AG04450 (cell line): ENCODE measurements at regions of chr5 and their contacts with region 1.

Region 1: GRCh38 chr5:108260117-108260857 is 121.6 kb downstream of the FBXL17 start:
- DNase-seq: peak; percentile 60
- H3K4me3 ChIP-seq: no peak overlapping the region
- H3K27ac ChIP-seq: no peak overlapping the region
- H3K27me3 ChIP-seq: no peaks in the 10 kb centered on the region
- CTCF ChIP-seq: peak; percentile 99

Region 2: DNA sequence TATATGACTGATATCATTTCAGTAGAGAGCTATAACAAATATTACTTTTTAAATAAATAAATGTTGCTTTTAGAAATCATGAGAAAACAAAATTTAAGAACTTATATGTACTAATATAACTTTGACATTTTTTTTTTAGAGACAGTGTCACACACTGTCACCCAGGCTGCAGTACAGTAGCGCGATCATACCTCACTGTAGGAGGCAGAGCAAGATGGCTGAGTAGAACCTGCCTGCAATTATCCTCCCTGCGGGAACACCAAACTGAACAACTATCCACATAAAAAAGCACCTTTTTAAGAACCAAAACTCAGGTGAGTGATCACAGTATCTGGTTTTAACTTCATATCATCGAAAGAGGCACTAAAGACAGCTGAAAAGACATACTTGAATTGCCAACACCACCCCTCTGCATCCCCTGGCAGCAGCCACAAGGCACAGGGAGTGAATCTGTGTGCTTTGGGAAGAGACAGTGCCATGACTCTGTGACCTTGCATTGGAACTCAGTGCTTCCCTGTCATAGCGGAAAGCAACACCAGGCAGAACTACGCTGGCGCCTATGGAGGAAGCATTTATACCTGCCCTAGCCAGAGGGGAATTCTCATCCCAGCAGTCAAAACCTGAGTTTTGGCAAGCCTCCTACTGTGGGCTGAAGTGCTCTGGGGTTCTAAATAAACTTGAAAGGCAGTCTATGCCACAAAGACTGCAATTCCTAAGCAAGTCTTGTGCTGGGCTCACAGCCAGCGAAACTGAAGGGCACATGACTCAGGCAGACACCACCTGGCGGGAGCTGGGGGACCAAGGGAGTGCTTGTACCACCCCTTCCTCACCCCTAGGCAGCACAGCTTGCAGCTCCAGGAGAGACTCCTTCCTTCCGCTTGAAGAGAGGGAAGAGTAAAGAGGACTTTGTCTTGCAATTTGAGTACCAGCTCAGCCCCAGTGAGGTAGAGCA is 21.1 kb before region 1 on chr5:
- CTCF ChIA-PET with region 1: interaction called, 29 read pairs
- POLR2A ChIA-PET with region 1: no interaction called
- DNase-seq: no peak
- H3K4me3 ChIP-seq: no peak overlapping the region
- H3K27ac ChIP-seq: no peak overlapping the region
- H3K27me3 ChIP-seq: no peaks in the 10 kb centered on the region
- CTCF ChIP-seq: no peak

Region 3: GRCh38 chr5:108303086-108303485 is 42.8 kb after region 1 on chr5:
- CTCF ChIA-PET with region 1: interaction called, 15 read pairs
- POLR2A ChIA-PET with region 1: no interaction called
- DNase-seq: no peak
- H3K4me3 ChIP-seq: no peak overlapping the region
- H3K27ac ChIP-seq: no peak overlapping the region
- H3K27me3 ChIP-seq: no peaks in the 10 kb centered on the region
- CTCF ChIP-seq: no peak

Region 4: DNA sequence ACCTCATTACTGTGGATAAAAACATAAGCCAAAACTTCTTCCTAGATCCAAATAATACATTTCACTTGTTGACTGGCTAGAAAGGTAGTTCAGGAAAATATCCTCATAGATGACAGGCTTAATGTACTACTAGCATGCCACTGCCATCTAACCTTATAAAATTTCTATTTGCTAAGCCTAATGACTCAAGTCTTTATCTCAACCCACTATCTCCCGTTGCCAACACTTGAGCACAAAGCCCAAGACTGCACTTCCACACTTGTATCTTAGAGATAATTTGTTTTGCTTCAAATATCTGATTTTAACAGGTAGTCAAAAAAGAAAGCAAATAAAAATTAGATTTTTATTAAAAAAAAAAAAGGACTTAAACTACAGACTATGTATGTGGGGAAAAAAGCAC is 78.9 kb after region 1 on chr5:
- CTCF ChIA-PET with region 1: interaction called, 186 read pairs
- POLR2A ChIA-PET with region 1: no interaction called
- DNase-seq: no peak
- H3K4me3 ChIP-seq: no peak overlapping the region
- H3K27ac ChIP-seq: no peak overlapping the region
- H3K27me3 ChIP-seq: no peaks in the 10 kb centered on the region
- CTCF ChIP-seq: no peak

Region 5: DNA sequence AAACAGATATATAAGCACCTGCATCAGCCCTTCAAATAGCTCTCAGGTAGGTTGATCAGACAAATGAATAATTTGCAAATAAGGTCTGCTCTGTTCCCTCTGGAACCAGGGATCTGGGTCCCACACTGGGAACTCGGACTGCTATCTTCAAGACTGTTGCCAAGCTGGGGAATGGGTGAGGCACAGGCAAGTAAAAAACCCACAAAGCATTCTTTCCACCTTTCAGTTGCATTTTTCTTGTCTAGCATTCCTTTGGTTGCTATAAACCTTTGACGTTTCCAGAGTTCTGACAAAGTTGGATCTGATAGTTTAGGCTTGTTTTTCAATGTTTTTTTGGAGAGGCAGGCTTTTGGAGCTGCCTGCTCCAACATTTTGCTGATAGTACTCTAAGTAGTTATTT is 101.5 kb after region 1 on chr5:
- CTCF ChIA-PET with region 1: interaction called, 17 read pairs
- POLR2A ChIA-PET with region 1: no interaction called
- DNase-seq: no peak
- H3K4me3 ChIP-seq: no peak overlapping the region
- H3K27ac ChIP-seq: no peak overlapping the region
- H3K27me3 ChIP-seq: no peaks in the 10 kb centered on the region
- CTCF ChIP-seq: no peak

Region 6: GRCh38 chr5:108418197-108418596 is 157.9 kb after region 1 on chr5:
- CTCF ChIA-PET with region 1: no interaction called
- POLR2A ChIA-PET with region 1: no interaction called
- DNase-seq: no peak
- H3K4me3 ChIP-seq: no peak overlapping the region
- H3K27ac ChIP-seq: no peak overlapping the region
- H3K27me3 ChIP-seq: no peaks in the 10 kb centered on the region
- CTCF ChIP-seq: no peak